ENCODE measurements at regions of chr5 and their contacts with region 1.

Region 1: GRCh38 chr5:95858661-95859326 is 36.3 kb upstream of the GLRX start:
- DNase-seq: peak; percentile 98
- ATAC-seq: peak; percentile 95
- H3K4me3 Mint-ChIP-seq: peak overlapping the region; percentile 12
- H3K27ac Mint-ChIP-seq: peak overlapping the region; percentile 86
- H3K4me1 Mint-ChIP-seq: peaks cover 58% of the 10 kb centered on the region
- H3K27me3 Mint-ChIP-seq: no peaks in the 10 kb centered on the region

Region 2: DNA sequence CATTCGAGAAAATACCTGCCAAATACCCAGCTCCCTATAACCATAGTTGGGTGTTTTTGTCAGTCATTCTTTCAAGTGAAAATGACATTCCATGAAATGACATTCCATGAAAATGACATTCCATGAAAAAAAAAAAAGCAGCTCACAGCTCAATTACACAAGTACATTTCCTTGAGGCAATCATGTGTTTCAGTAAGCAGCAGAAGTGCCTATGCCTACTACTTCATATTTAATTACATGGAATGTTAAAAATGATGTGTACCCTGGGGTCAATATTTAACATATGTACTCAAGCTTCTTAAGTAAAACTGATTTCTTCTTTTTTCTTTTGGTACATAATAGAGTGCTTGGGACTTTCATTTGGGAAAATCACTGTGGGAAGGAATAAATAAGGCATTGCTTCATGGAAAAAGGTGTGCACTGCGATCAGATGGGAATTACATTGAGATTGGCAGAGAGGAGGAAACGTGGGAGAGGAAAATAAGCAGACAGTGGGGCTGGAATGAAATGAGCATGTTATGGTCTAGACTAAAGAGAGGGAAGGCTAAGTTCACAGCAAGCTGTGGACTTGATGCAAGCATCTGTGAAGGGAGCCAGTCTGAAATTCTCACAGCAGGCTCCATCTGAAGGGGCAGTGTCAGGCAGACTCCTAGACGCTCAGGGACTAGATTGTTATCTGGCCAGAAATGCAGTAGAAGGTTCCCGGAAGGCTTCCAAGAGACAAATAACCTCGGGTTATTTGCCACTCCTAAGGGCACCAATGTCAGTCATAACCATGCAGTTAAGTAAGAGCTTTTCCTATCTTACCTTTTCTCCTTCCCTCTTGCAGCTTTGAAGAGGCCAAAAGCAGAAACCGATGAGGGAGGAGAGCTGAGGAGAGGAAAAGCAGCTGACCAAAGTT is 160.8 kb before region 1 on chr5:
- CTCF ChIA-PET with region 1: no interaction called
- POLR2A ChIA-PET with region 1: no interaction called
- intact Hi-C with region 1: no loop called
- DNase-seq: no peak
- ATAC-seq: no peak
- H3K4me3 Mint-ChIP-seq: no peak overlapping the region
- H3K27ac Mint-ChIP-seq: no peak overlapping the region
- H3K4me1 Mint-ChIP-seq: no peaks in the 10 kb centered on the region
- H3K27me3 Mint-ChIP-seq: peaks cover 6% of the 10 kb centered on the region

Region 3: DNA sequence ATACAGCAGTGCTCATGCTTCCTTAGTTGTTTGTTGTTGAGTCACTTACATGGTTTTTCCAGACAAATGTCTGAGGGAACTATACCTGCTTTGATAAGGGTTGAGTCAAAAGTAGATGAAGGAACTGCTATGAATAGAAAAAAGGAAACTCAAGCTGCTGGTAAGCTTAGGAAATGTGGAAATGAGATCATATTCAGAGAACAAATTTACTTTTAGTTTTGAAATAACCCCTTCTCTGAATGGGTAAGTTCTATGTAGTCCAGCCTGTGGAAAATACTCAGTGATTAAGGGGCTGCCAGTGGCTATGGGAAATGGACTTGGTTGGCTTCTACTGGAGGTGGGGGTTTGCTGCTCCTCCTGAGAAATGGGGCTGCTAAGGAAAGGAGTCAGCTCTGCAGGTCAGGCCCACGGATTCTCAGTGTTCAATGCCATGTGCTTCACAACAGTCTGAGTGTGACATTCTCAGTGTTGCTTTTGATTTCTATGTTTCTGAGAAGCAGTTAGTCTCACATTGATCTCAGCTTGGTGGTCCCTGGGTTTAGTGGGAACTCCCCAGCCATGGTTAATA is 11.4 kb after region 1 on chr5:
- CTCF ChIA-PET with region 1: interaction called, 17 read pairs
- POLR2A ChIA-PET with region 1: interaction called, 8 read pairs
- intact Hi-C with region 1: loop called (anchors 1 kb)
- DNase-seq: peak; percentile 70
- ATAC-seq: peak; percentile 78
- H3K4me3 Mint-ChIP-seq: peak overlapping the region; percentile 63
- H3K27ac Mint-ChIP-seq: peak overlapping the region; percentile 98
- H3K4me1 Mint-ChIP-seq: peaks cover 62% of the 10 kb centered on the region
- H3K27me3 Mint-ChIP-seq: no peaks in the 10 kb centered on the region

Region 4: DNA sequence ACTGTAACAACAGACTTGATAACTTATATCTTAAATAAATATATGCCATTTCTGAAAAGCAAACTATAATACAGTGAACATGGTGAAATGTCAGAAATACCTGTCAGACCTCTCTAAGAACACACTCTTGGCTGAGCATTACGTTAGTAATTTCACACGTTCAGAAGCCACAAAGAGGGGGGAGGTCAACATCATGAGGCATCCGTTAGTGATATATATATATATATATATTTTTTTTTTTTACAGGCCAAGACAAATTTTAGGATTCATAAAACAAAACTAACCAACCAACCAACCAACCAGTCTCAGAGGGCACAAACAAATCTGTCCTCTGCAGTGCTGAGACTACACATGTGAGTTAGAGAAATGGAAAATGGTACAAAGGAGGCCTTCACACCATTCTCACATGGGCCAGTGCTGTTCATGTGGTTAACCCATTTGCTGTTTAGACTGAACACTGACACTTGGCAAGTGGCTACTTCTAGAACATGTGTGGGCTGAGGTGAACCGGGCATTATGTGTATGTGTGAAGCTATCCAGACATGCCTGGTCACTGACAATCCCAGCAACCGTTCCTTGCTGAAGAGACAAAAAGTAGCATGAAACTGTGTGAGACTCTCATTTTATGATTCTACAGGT is 48.4 kb after region 1 on chr5:
- CTCF ChIA-PET with region 1: no interaction called
- POLR2A ChIA-PET with region 1: no interaction called
- intact Hi-C with region 1: no loop called
- DNase-seq: no peak
- ATAC-seq: no peak
- H3K4me3 Mint-ChIP-seq: no peak overlapping the region
- H3K27ac Mint-ChIP-seq: no peak overlapping the region
- H3K4me1 Mint-ChIP-seq: peaks cover 3% of the 10 kb centered on the region
- H3K27me3 Mint-ChIP-seq: no peaks in the 10 kb centered on the region

Region 5: GRCh38 chr5:96001262-96001661 is 142.5 kb after region 1 on chr5:
- CTCF ChIA-PET with region 1: no interaction called
- POLR2A ChIA-PET with region 1: no interaction called
- intact Hi-C with region 1: no loop called
- DNase-seq: no peak
- ATAC-seq: no peak
- H3K4me3 Mint-ChIP-seq: no peak overlapping the region
- H3K27ac Mint-ChIP-seq: no peak overlapping the region
- H3K4me1 Mint-ChIP-seq: peaks cover 7% of the 10 kb centered on the region
- H3K27me3 Mint-ChIP-seq: peaks cover 5% of the 10 kb centered on the region

Region 6: DNA sequence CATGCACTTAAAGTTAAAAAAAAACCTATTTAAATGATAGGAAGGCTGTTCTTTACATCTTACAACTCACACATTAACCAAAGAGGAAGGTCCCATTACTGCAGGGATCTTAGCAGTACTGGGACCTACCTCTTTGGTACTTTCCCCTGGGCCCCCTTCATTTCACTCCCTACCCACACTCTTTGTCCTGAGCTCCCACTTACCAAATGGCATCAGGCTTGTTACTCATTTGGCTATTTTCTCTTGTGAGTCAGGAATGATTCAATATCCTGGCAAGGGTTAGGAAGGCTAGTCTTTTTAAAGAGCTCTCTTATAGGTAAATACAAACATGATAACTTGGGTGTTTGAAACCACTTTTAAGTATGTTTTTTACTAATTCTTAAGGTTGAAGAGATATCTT is 220.3 kb after region 1 on chr5:
- CTCF ChIA-PET with region 1: interaction called, 3 read pairs
- POLR2A ChIA-PET with region 1: no interaction called
- intact Hi-C with region 1: loop called in 1 of 2 experiments (anchors 2 kb)
- DNase-seq: peak; percentile 66
- ATAC-seq: peak; percentile 97
- H3K4me3 Mint-ChIP-seq: no peak overlapping the region
- H3K27ac Mint-ChIP-seq: peak overlapping the region; percentile 83
- H3K4me1 Mint-ChIP-seq: peaks cover 42% of the 10 kb centered on the region
- H3K27me3 Mint-ChIP-seq: peaks cover 18% of the 10 kb centered on the region

Region 7: GRCh38 chr5:96279801-96280542 is 421.2 kb after region 1 on chr5:
- CTCF ChIA-PET with region 1: no interaction called
- POLR2A ChIA-PET with region 1: no interaction called
- intact Hi-C with region 1: loop called in 1 of 2 experiments (anchors 1 kb)
- DNase-seq: peak; percentile 48
- ATAC-seq: peak; percentile 96
- H3K4me3 Mint-ChIP-seq: no peak overlapping the region
- H3K27ac Mint-ChIP-seq: peak overlapping the region; percentile 35
- H3K4me1 Mint-ChIP-seq: peaks cover 23% of the 10 kb centered on the region
- H3K27me3 Mint-ChIP-seq: peaks cover 30% of the 10 kb centered on the region

Region 8: DNA sequence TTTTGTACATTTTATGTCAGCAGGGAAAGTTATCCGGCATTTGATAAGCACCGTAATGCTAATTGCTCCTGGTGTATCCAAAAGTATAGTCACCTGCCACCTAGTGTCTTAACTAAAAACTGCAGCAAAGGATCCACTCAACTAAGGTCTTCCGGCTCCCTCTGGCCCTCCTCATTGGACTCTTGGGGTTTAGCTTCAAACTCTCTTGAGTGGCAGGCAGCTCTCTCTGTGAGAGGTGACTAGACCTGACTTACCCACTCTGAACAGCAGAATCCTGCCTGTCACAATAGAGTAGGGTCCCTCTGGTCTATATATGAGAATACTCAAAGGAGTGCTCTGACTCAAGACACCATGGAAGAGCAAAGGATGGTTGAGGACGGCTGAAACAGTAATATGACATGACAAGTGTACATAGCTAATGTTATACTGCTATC is 743.0 kb after region 1 on chr5:
- CTCF ChIA-PET with region 1: interaction called, 8 read pairs
- POLR2A ChIA-PET with region 1: no interaction called
- intact Hi-C with region 1: loop called (anchors 1 kb)
- DNase-seq: peak; percentile 64
- ATAC-seq: peak; percentile 69
- H3K4me3 Mint-ChIP-seq: no peak overlapping the region
- H3K27ac Mint-ChIP-seq: no peak overlapping the region
- H3K4me1 Mint-ChIP-seq: peaks cover 15% of the 10 kb centered on the region
- H3K27me3 Mint-ChIP-seq: peaks cover 5% of the 10 kb centered on the region